H1 (cell line): ENCODE measurements at regions of chr6 and their contacts with region 1.

Region 1: DNA sequence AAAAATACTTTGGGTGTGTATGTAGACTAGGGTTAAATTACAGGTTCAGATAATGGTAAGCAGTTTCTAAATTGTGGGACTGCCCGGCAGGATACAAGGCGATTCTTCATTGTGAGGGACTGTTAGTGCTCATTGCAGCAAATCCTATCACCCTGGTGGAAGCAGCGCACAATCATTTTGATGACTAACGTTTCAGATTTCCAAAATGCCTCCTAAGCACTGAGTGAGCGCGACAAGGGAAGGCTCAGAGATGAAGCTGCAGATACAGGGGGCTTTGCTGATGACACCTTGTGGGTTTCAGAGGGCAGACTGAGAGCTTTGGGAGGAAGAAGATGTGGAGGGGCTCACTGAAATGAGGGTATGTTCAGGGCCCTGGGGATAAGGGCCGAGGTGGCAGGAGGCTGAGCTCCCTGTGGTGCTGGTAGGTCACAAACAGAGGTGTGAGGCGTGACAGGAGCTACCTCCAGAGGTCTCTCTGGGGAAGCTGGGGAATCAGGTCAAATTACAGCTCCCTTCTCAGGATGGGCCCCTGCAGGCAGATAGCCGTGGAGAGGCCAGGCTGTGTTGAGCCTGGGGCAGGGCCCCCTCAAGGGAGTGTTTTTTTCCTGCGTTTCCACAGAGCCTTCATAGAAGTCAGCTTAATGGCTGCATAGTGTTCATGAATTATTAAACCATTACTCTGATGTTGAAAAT is 84.5 kb upstream of the FYN start:
- DNase-seq: peak; percentile 31 to 56
- H3K4me3 ChIP-seq: no peak overlapping the region
- H3K27ac ChIP-seq: no peak overlapping the region
- H3K4me1 ChIP-seq: peaks cover 0 to 6% (median 3%) of the 10 kb centered on the region in 4 experiments; a peak in 5 of 7 replicates
- H3K27me3 ChIP-seq: no peaks in the 10 kb centered on the region; a peak in 2 of 7 replicates
- CTCF ChIP-seq: peak in 1 of 3 experiments; percentile 41; a peak in 2 of 4 replicates
- EP300 ChIP-seq: no peak
- POLR2A ChIP-seq: no peak
- RAD21 ChIP-seq: peak; percentile 49 to 60

Region 2: DNA sequence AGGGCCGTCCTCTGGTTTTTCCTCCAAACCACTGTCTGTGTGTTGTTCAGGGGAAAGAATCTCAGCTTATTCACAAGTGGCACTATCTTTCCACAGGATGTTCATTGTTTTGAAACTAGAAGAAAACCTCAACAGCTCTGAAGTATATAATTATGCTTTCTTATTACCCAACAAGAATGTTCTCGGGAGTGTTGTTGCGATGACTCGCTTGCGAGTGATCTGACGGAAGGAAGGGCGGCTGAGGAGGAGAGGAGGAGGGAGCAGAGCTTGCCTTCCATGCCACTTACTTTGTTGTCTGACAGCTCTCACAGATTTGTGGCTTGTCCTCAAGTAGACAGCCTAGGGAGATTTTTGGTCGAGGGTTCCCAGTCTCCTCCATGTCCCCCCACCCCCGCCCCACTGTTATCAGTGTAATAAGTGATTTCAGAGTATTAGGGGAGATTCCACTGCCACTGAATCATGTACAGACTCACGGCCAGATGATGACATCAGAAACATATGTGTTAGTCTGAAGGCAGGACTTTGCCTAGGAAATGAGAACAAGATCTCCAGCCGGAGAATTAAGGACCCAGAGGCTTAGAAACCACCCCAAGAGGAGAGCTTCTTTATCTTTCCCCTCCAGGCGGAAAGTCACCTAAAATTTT is 15.5 kb after region 1 on chr6:
- CTCF ChIA-PET with region 1: interaction called, 16 read pairs
- POLR2A ChIA-PET with region 1: interaction called, 3 read pairs
- DNase-seq: no peak
- H3K4me3 ChIP-seq: no peak overlapping the region
- H3K27ac ChIP-seq: no peak overlapping the region
- H3K4me1 ChIP-seq: peaks cover 0 to 3% (median under 1%) of the 10 kb centered on the region in 4 experiments; a peak in 2 of 7 replicates
- H3K27me3 ChIP-seq: no peaks in the 10 kb centered on the region
- CTCF ChIP-seq: no peak
- EP300 ChIP-seq: no peak
- POLR2A ChIP-seq: no peak
- RAD21 ChIP-seq: no peak

Region 3: DNA sequence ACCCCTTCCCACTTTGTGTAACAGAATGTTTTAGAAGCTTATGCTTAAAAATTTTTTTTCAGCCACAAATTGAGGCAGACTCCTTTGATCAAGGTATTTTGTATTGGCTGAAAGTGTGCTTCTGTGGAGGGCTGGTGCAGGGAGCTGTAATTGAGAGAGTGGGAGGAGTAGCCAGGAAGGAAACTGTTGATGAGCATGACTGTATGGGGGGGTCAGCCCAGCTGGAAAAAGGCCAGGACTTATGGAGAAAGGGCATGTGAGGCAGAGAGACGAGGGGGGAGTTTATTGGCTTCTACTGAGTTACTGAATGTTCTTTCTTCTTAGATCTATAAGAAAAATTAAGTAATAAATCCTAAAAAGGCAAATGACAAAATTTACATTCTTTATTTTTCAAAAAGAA is 402.7 kb after region 1 on chr6:
- CTCF ChIA-PET with region 1: no interaction called
- POLR2A ChIA-PET with region 1: no interaction called
- DNase-seq: no peak
- H3K4me3 ChIP-seq: no peak overlapping the region
- H3K27ac ChIP-seq: no peak overlapping the region
- H3K4me1 ChIP-seq: no peaks in the 10 kb centered on the region
- H3K27me3 ChIP-seq: no peaks in the 10 kb centered on the region
- CTCF ChIP-seq: no peak
- EP300 ChIP-seq: no peak
- POLR2A ChIP-seq: no peak
- RAD21 ChIP-seq: no peak